Heart right ventricle (tissue), 16 donors: ENCODE measurements at regions of chr9 and their contacts with region 1.

Region 1: DNA sequence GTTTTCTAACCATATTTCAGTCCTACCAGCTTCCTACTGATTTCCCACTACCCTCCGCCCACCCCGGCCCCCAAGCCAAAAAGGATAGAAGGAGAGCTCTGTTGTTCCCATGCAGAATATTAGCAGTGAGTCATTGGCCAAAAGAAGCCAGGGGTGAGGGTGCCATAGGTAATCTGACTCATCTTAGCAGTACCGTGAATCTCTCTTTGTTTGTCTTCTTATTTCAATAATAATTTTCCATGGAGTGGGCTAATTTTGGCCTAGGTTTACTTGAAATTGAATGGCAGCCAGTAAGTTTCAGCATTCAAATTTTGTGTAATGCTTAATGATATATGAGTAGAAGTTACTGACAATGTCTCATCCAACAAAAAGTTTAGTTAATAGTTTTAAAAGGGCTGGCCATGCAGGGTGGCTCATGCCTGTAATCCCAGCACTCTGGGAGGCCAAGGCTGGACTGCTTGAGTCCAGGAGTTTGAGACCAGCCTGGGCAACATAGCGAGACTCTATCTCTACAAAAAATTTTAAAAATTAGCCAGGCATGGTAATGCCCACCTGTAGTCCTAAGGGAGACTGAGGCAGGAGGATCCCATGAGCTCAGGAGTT is 74.2 kb downstream of the C9orf152 start:
- DNase-seq: no peak
- ATAC-seq: no peak
- H3K4me3 ChIP-seq: no peak overlapping the region
- H3K27ac ChIP-seq: peak overlapping the region in 5 of 10 donors; percentile 6 to 61 (median 27)
- H3K4me1 ChIP-seq: peaks cover 19 to 99% (median 84%) of the 10 kb centered on the region in 9 donors
- H3K27me3 ChIP-seq: no peaks in the 10 kb centered on the region
- CTCF ChIP-seq: no peak

Region 2: DNA sequence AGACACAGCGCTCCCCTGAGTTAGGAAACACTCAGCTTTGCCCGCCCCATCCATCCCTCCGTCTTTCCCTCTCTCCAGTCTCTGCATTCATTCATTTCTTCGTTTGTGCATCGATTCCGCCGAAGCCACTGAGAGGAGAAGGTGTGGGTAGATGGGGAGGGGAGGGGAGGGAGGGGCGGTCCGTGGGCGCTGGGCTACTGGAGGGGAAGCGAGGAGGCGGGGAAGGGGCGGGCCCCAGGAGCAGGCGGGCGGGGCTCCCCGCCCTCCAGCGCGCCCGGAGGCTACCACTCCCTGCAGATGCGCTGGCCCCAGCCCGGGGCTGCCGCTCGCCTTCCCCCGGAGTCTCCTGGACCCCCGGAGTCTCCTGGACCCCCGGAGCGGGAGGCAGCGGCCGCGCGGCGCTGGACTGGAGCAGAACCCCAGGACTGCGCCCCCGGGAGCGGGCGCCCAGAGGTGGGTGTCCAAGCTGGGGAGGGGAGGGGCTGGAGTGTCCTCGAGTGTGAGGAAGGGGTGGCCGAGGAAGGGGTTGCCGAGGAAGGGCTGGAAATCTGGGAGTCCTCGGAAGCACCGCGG is 85.2 kb before region 1 on chr9:
- intact Hi-C with region 1: loop called in 1 of 10 experiments (anchors 5 kb)
- DNase-seq: peak; percentile 85 to 86
- ATAC-seq: peak; percentile 93 to 96 (median 95)
- H3K4me3 ChIP-seq: peak overlapping the region; percentile 58 to 92 (median 86)
- H3K27ac ChIP-seq: peak overlapping the region; percentile 41 to 91 (median 85)
- H3K4me1 ChIP-seq: peaks cover 0 to 59% (median 47%) of the 10 kb centered on the region in 9 donors
- H3K27me3 ChIP-seq: peaks cover 0 to 11% (median 0%) of the 10 kb centered on the region in 7 donors
- CTCF ChIP-seq: no peak